ENCODE measurements at regions of chr14 and their contacts with region 1.

Region 1: DNA sequence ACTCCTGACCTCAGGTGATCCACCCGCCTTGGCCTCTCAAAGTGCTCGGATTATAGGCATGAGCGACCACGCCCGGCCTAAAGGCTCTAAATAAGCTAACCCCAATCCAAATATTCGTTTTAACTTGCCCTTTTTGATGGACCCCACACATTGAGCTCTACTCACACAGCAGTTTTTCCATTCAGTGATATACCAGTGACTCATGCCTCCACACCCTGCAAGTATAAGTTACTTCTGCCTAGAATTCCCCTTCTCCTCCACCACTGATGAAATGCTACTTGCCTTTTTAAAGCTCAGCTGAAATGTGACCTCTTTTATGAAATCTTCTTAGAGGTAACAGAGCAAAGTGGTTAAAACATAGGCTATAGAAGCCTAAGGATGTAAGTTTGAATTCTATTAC is 68.8 kb downstream of the EXOC5 start:
- DNase-seq: no peak
- ATAC-seq: no peak
- H3K4me3 ChIP-seq: no peak overlapping the region
- H3K4me3 Mint-ChIP-seq: no peak overlapping the region
- H3K27ac ChIP-seq: no peak overlapping the region
- H3K27ac Mint-ChIP-seq: no peak overlapping the region
- H3K4me1 ChIP-seq: no peaks in the 10 kb centered on the region
- H3K4me1 Mint-ChIP-seq: no peaks in the 10 kb centered on the region
- H3K27me3 ChIP-seq: peaks cover 0 to 5% of the 10 kb centered on the region in 2 experiments
- H3K27me3 Mint-ChIP-seq: peaks cover 13% of the 10 kb centered on the region
- CTCF ChIP-seq: no peak

Region 2: DNA sequence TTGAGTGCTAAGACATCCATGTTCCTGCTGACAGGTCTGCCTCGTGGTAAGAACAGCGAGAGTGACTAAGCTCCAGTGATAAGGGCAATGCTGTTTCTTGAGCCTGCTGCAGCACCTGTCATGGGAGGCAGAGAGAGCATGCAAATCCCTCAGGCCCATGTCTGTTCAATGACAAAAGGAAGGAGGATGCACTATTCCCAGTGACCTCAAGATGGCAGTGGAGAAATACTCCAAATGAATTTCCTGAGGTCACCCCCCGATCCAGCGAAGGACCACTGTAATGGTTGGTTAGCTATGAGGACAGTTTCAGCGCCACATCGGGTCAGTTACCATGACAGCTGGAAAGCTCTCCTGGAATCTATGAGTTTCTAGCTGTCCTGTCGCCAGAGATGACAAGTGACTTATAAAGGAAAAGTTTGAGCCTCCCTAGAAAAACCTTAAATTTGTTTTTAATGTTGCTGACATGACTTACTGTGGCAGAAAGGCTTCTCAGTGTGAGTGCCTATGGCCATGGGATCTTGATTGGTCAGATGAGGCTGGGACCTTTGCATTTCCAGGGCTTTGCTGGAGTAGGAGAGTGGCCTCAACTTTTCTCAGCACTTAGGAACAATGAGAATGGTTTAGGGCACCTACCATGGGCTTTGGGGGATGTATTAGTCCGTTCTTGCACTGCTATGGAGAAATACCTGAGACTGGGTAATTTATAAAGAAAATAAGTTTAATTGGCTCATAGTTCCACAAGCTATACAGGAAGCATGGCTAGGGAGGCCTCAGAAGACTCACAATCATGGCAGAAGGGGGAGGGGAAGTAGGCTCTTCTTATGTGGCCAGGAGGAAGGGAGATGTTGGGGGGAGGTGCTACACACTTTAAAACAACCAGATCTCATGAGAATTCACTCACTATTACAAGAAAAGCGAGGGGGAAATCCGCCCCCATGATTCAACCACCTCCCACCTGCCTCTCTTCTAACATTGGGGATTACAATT is 708.3 kb before region 1 on chr14:
- CTCF ChIA-PET with region 1: no interaction called
- POLR2A ChIA-PET with region 1: no interaction called
- intact Hi-C with region 1: loop called (anchors 5 kb)
- DNase-seq: peak in 6 of 14 experiments; percentile 3 to 60 (median 31)
- ATAC-seq: peak; percentile 48
- H3K4me3 ChIP-seq: no peak overlapping the region
- H3K4me3 Mint-ChIP-seq: no peak overlapping the region
- H3K27ac ChIP-seq: no peak overlapping the region
- H3K27ac Mint-ChIP-seq: no peak overlapping the region
- H3K4me1 ChIP-seq: peaks cover 5% of the 10 kb centered on the region
- H3K4me1 Mint-ChIP-seq: peaks cover 11% of the 10 kb centered on the region
- H3K27me3 ChIP-seq: no peaks in the 10 kb centered on the region
- H3K27me3 Mint-ChIP-seq: peaks cover 10% of the 10 kb centered on the region
- CTCF ChIP-seq: peak; percentile 55

Region 3: GRCh38 chr14:56555921-56556570 is 643.9 kb before region 1 on chr14:
- CTCF ChIA-PET with region 1: no interaction called
- POLR2A ChIA-PET with region 1: no interaction called
- intact Hi-C with region 1: loop called in 1 of 2 experiments (anchors 5 kb)
- DNase-seq: peak in 2 of 14 experiments; percentile 8 to 20
- ATAC-seq: no peak
- H3K4me3 ChIP-seq: no peak overlapping the region
- H3K4me3 Mint-ChIP-seq: no peak overlapping the region
- H3K27ac ChIP-seq: no peak overlapping the region
- H3K27ac Mint-ChIP-seq: no peak overlapping the region
- H3K4me1 ChIP-seq: no peaks in the 10 kb centered on the region
- H3K4me1 Mint-ChIP-seq: no peaks in the 10 kb centered on the region
- H3K27me3 ChIP-seq: peaks cover 5 to 12% of the 10 kb centered on the region in 2 experiments
- H3K27me3 Mint-ChIP-seq: peaks cover 45% of the 10 kb centered on the region
- CTCF ChIP-seq: no peak

Region 4: GRCh38 chr14:57189070-57189469 is 10.9 kb before region 1 on chr14:
- CTCF ChIA-PET with region 1: no interaction called
- POLR2A ChIA-PET with region 1: no interaction called
- intact Hi-C with region 1: no loop called
- DNase-seq: no peak
- ATAC-seq: no peak
- H3K4me3 ChIP-seq: no peak overlapping the region
- H3K4me3 Mint-ChIP-seq: no peak overlapping the region
- H3K27ac ChIP-seq: no peak overlapping the region
- H3K27ac Mint-ChIP-seq: no peak overlapping the region
- H3K4me1 ChIP-seq: no peaks in the 10 kb centered on the region
- H3K4me1 Mint-ChIP-seq: no peaks in the 10 kb centered on the region
- H3K27me3 ChIP-seq: no peaks in the 10 kb centered on the region
- H3K27me3 Mint-ChIP-seq: peaks cover 60% of the 10 kb centered on the region
- CTCF ChIP-seq: no peak

Region 5: DNA sequence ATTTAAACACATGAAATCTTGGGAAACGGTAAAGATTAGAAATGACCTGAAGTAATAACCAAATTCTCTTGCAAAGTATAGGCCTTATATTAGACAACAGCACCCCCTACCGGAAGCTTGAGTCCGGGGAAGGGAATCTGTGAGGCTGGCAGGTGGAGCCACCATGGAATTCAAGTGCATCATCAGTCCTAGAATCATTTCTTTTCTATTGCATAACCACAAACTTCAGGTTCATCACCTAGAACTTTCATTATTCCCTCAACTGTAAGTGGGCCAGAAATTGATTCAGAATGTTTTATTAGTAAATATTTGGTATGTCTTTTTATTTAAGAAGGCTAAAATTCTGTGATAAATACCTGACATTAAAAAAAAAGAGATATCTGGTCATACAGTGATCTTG is 117.4 kb after region 1 on chr14:
- CTCF ChIA-PET with region 1: no interaction called
- POLR2A ChIA-PET with region 1: no interaction called
- intact Hi-C with region 1: loop called in 1 of 2 experiments (anchors 10 kb)
- DNase-seq: peak; percentile 50 to 85 (median 64)
- ATAC-seq: peak; percentile 57
- H3K4me3 ChIP-seq: no peak overlapping the region
- H3K4me3 Mint-ChIP-seq: no peak overlapping the region
- H3K27ac ChIP-seq: no peak overlapping the region
- H3K27ac Mint-ChIP-seq: no peak overlapping the region
- H3K4me1 ChIP-seq: no peaks in the 10 kb centered on the region
- H3K4me1 Mint-ChIP-seq: no peaks in the 10 kb centered on the region
- H3K27me3 ChIP-seq: peaks cover 0 to 19% of the 10 kb centered on the region in 2 experiments
- H3K27me3 Mint-ChIP-seq: peaks cover 19% of the 10 kb centered on the region
- CTCF ChIP-seq: peak; percentile 91